CD4-positive, alpha-beta memory T cell (primary cell): ENCODE measurements at regions of chr2 and their contacts with region 1.

Region 1: DNA sequence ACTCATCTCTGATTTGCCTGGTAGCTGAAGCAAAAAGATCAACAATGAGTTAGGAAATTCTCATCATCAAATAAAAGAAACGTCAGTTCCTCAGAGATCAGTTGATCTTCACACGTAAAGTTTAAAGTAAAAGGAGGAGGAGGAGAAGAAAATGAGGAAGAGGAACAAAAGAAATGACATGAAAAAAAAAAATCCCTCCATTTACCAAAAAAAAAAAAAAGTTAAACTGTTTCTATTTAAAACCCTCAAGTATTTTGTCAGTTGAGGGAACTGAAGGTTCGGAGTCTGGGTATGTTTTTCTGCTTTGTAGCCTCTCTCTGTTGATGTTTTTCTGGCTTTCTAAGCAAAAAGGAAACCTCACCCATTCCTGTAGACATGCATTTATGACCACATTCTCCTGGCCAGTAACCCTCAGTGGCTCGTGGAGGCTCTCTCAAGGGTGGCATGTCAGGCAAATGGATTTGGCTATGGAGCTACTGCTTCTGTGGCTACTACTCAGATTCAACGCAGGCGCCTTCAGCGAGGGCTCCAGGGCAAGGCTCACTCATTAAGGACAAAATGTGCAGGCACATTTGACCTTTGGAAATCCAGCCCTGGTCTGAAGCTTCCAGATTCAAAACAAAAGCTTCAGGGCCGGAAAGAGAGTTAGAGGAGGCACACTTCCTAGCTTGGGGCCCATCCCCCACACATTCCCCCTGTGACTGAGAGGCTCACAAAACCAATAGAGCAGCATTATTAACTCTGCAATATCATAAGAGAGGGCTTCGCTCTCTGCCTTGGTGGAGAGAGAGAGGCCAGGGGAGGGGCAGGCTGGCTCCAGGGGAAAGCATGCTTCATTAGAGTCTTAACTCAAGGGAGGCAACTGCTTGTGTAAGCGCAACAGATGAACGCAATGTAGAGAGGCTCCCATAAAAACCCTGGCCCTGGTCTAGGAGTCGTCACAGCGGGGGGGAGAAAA is 22.3 kb downstream of the KLF7 start:
- DNase-seq: peak; percentile 74 to 85 (median 77)
- H3K4me3 ChIP-seq: peak overlapping the region in 1 of 2 donors; percentile 15
- H3K4me3 Mint-ChIP-seq: peak overlapping the region; percentile 66 to 84 (median 74)
- H3K27ac ChIP-seq: peak overlapping the region; percentile 69
- H3K27ac Mint-ChIP-seq: peak overlapping the region; percentile 84 to 96 (median 93)
- H3K4me1 ChIP-seq: peaks cover 58% of the 10 kb centered on the region
- H3K4me1 Mint-ChIP-seq: peaks cover 48 to 81% (median 67%) of the 10 kb centered on the region in 4 donors
- H3K27me3 ChIP-seq: no peaks in the 10 kb centered on the region
- H3K27me3 Mint-ChIP-seq: no peaks in the 10 kb centered on the region

Region 2: GRCh38 chr2:206790311-206790935 is 353.1 kb before region 1 on chr2:
- CTCF ChIA-PET with region 1: no interaction called
- POLR2A ChIA-PET with region 1: no interaction called
- intact Hi-C with region 1: loop called (anchors 5 kb)
- DNase-seq: no peak
- H3K4me3 ChIP-seq: no peak overlapping the region
- H3K4me3 Mint-ChIP-seq: no peak overlapping the region
- H3K27ac ChIP-seq: no peak overlapping the region
- H3K27ac Mint-ChIP-seq: peak overlapping the region in 2 of 7 donors; percentile 53 to 61
- H3K4me1 ChIP-seq: no peaks in the 10 kb centered on the region
- H3K4me1 Mint-ChIP-seq: no peaks in the 10 kb centered on the region
- H3K27me3 ChIP-seq: no peaks in the 10 kb centered on the region
- H3K27me3 Mint-ChIP-seq: no peaks in the 10 kb centered on the region

Region 3: GRCh38 chr2:207073801-207074678 is 69.5 kb before region 1 on chr2:
- CTCF ChIA-PET with region 1: interaction called, 3 read pairs
- POLR2A ChIA-PET with region 1: interaction called, 20 read pairs
- intact Hi-C with region 1: no loop called
- DNase-seq: peak in 3 of 5 donors; percentile 1 to 14 (median 9)
- H3K4me3 ChIP-seq: no peak overlapping the region
- H3K4me3 Mint-ChIP-seq: peak overlapping the region; percentile 42 to 80 (median 54)
- H3K27ac ChIP-seq: no peak overlapping the region
- H3K27ac Mint-ChIP-seq: peak overlapping the region in 6 of 7 donors; percentile 9 to 84 (median 43)
- H3K4me1 ChIP-seq: peaks cover 17% of the 10 kb centered on the region
- H3K4me1 Mint-ChIP-seq: peaks cover 20 to 30% (median 22%) of the 10 kb centered on the region in 4 donors
- H3K27me3 ChIP-seq: no peaks in the 10 kb centered on the region
- H3K27me3 Mint-ChIP-seq: peaks cover 5% of the 10 kb centered on the region in 2 donors

Region 4: DNA sequence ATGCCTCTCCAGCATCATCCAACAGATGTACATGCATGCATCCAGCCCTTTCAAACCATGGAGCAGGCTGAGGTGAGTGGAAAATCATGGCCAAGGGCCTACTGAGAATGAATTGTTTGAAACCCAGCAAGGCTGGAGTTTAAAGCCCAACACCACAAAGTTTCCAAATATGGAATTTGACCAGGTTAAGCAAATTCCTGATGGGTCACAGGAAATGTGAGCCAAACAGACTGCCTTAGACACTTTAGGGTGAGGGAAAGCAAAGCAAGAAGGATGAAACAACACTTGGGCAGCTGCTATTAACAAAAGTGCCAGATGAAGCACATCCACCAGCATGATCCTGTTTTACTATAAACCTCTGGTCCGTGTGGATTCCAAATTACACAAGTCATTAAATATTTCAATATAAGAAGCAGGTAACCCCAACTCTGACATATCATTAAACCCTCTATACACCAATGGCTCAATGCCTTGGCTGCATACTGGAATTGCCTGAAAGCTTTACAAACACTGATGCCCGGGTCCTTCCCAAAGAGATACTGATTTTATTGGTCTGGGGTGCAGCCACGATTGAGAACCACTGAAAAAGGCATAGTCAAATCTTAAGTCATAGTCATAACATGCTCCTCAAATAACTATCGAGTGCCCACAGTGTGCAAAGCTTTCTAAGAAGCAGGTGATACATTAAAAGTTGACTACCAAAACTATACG is 13.1 kb after region 1 on chr2:
- CTCF ChIA-PET with region 1: interaction called, 8 read pairs
- POLR2A ChIA-PET with region 1: interaction called, 86 read pairs
- intact Hi-C with region 1: loop called (anchors 1 kb)
- DNase-seq: no peak
- H3K4me3 ChIP-seq: no peak overlapping the region
- H3K4me3 Mint-ChIP-seq: peak overlapping the region in 7 of 8 donors; percentile 6 to 76 (median 43)
- H3K27ac ChIP-seq: no peak overlapping the region
- H3K27ac Mint-ChIP-seq: peak overlapping the region in 5 of 7 donors; percentile 19 to 88 (median 73)
- H3K4me1 ChIP-seq: peaks cover 54% of the 10 kb centered on the region
- H3K4me1 Mint-ChIP-seq: peaks cover 49 to 89% (median 74%) of the 10 kb centered on the region in 4 donors
- H3K27me3 ChIP-seq: no peaks in the 10 kb centered on the region
- H3K27me3 Mint-ChIP-seq: no peaks in the 10 kb centered on the region